Activated CD4-positive, alpha-beta memory T cell treated with anti-CD3 and anti-CD28 coated beads for 36 hours (primary cell): ENCODE measurements at regions of chr2 and their contacts with region 1.

Region 1: DNA sequence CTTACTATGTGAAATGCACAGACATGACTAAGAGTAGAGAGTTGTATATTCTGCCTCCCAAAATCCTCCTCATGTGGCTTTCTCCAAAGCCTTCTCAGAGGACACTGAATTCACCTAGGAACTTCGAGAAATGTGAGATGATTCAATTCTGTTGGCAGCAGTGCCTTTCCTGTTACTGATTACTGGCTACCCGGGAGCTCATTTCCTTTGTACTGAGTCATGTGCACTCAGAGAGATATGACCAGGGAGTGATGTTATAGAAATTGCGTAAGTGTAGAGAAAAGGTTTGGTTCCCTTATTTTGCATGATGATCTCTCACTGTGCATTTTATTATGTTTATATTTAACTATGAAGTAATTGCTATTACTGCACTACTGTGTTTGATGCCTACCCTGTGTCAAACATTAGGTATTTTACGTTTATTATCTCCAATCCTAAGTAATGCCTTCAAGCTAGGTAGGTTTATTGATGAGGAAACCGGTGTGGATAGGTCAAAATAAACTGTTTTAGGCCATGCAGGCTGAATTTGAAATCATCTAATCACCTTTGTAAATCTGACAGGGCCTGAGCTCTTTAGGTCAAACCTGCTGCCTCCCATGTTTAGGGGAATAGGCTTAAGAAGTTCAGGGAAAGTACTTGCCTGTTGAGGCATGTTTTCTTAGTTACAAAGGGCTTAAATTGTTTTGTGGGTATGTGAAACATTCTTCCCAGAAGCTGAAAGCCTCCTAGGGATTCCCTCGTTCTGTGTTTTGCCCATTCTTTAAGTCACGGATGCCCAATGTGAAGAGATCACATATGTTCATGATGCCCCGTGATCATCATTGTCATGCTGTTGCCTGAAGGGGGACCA is 86.8 kb downstream of the FMNL2 start:
- DNase-seq: peak; percentile 15
- H3K4me3 Mint-ChIP-seq: no peak overlapping the region
- H3K27ac Mint-ChIP-seq: no peak overlapping the region
- H3K4me1 Mint-ChIP-seq: peaks cover 15% of the 10 kb centered on the region
- H3K27me3 Mint-ChIP-seq: peaks cover 29% of the 10 kb centered on the region

Region 2: DNA sequence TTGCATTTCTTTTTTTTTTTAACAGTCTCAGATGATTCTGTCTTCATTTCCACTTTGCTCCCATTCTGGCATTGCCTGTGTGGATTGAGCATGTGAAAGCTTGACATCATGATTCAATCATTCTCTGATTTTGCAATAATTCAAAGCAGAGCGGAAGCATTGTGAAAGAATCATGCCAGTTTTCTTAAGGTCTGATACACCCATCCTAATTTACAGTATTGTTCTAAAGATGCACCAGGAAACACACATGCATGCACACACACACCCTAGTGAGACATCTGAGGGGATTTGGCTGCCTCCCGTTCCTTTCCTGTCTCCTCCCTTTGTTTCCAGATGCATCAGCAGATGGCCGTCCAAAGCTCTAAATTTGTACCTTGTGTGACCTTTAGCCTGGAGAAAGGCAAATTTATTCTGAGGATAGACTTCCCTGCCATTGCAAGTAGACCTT is 10.5 kb after region 1 on chr2:
- CTCF ChIA-PET with region 1: no interaction called
- POLR2A ChIA-PET with region 1: no interaction called
- intact Hi-C with region 1: no loop called
- DNase-seq: no peak
- H3K4me3 Mint-ChIP-seq: no peak overlapping the region
- H3K27ac Mint-ChIP-seq: no peak overlapping the region
- H3K4me1 Mint-ChIP-seq: no peaks in the 10 kb centered on the region
- H3K27me3 Mint-ChIP-seq: peaks cover 3% of the 10 kb centered on the region

Region 3: GRCh38 chr2:152445791-152446201 is 24.1 kb after region 1 on chr2:
- CTCF ChIA-PET with region 1: no interaction called
- POLR2A ChIA-PET with region 1: no interaction called
- intact Hi-C with region 1: no loop called
- DNase-seq: no peak
- H3K4me3 Mint-ChIP-seq: no peak overlapping the region
- H3K27ac Mint-ChIP-seq: no peak overlapping the region
- H3K4me1 Mint-ChIP-seq: peaks cover 3% of the 10 kb centered on the region
- H3K27me3 Mint-ChIP-seq: peaks cover 18% of the 10 kb centered on the region

Region 4: DNA sequence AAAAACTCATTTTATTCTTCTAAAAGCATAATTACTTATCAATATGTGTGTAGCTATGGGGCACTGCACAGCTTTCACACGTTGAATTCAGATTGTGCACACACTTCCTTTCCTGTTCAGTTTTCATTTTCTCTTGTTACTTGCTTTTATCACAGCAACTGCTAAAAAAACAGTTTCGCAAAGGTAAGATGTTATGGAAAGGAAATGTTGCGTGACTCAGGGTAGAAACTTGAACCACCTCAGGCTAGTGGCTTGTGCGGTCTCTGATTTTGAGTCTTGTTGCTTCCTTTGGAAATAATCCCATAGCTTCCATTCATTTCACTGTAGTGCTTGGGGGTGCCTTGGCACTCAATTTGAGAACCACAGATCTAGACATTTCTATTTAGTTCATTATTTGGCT is 85.1 kb after region 1 on chr2:
- CTCF ChIA-PET with region 1: no interaction called
- POLR2A ChIA-PET with region 1: no interaction called
- intact Hi-C with region 1: loop called (anchors 1 kb)
- DNase-seq: peak; percentile 46
- H3K4me3 Mint-ChIP-seq: no peak overlapping the region
- H3K27ac Mint-ChIP-seq: no peak overlapping the region
- H3K4me1 Mint-ChIP-seq: peaks cover 2% of the 10 kb centered on the region
- H3K27me3 Mint-ChIP-seq: peaks cover 8% of the 10 kb centered on the region

Region 5: GRCh38 chr2:152635635-152636298 is 214.0 kb after region 1 on chr2:
- CTCF ChIA-PET with region 1: no interaction called
- POLR2A ChIA-PET with region 1: no interaction called
- intact Hi-C with region 1: loop called (anchors 5 kb)
- DNase-seq: peak; percentile 69
- H3K4me3 Mint-ChIP-seq: no peak overlapping the region
- H3K27ac Mint-ChIP-seq: no peak overlapping the region
- H3K4me1 Mint-ChIP-seq: no peaks in the 10 kb centered on the region
- H3K27me3 Mint-ChIP-seq: peaks cover 7% of the 10 kb centered on the region

Region 6: DNA sequence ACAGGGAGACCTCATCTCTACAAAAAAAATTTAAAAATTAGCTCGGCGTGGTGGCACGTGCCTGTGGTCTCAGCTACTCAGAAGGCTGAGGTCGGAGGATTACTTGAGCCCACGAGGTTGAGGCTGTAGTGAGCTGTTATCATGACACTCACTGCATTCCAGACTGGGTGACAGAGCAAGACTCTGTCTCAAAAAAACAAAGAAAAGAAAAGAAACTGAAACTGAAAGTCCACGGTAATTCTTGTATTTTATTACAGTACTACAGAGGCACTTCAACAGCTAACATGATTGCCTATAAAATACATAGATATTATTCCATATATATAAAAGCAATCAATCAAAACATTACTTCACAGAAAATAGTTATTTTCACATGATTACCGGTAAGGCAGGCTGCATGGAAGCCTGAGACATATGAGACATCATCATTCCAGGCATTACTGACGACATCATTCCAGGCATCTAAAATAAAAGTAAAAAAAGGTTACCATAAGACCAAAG is 272.5 kb after region 1 on chr2:
- CTCF ChIA-PET with region 1: no interaction called
- POLR2A ChIA-PET with region 1: no interaction called
- intact Hi-C with region 1: loop called (anchors 5 kb)
- DNase-seq: peak; percentile 71
- H3K4me3 Mint-ChIP-seq: peak overlapping the region; percentile 60
- H3K27ac Mint-ChIP-seq: peak overlapping the region; percentile 80
- H3K4me1 Mint-ChIP-seq: peaks cover 40% of the 10 kb centered on the region
- H3K27me3 Mint-ChIP-seq: no peaks in the 10 kb centered on the region